AG04450 (cell line): ENCODE measurements at regions of chr6 and their contacts with region 1.

Region 1: DNA sequence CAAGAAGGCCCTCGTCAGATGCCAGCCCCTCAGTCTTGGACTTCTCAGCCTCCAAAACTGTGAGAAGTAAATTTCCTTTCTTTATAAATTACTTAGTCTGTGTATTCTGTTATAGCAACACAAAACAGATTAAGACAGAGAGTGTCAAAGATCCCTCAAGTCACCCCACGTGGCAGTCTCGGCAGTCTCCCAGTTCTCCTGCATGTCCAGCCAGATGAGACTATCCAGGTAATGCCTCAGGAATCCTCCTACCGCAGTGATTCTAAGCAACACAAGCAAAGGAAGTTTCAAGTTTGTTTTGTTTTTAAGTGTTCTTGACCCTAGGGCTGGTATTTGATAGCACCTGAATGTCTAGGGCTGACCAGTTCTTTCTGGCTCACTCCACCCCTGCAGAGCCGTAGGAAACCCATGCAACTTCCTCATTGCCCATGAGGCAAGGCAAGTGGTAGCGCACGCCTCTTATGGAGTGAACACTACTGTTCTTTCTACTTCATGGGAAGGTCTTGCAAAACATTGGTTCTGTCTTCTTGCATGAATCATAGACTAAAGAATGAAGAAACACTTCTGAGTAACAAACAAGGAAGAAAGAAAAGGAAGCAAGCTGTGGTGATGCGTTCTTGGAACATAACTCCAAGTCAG is 24.8 kb upstream of the FOXQ1 start:
- DNase-seq: peak; percentile 63
- H3K4me3 ChIP-seq: no peak overlapping the region
- H3K27ac ChIP-seq: peak overlapping the region; percentile 49
- H3K27me3 ChIP-seq: no peaks in the 10 kb centered on the region
- CTCF ChIP-seq: no peak

Region 2: DNA sequence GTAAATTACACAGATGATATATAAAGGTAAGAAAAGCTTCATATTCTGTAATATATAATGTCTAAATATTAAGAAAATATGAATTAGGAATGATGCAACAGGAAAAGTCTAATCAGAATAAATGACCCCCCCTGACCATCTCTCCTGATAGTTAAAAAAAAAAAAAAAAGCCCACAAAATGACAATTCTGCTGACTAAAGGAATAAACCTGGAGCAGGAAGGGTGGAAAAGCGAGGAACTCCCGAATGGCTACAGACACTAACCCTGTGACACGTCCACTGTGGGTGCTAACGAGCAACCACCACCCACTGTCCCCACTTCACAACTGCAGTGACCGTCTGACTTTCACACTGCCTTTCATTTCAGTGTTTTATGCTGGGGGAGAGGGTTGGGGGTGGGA is 42.8 kb before region 1 on chr6:
- CTCF ChIA-PET with region 1: no interaction called
- POLR2A ChIA-PET with region 1: interaction called, 10 read pairs
- DNase-seq: no peak
- H3K4me3 ChIP-seq: no peak overlapping the region
- H3K27ac ChIP-seq: no peak overlapping the region
- H3K27me3 ChIP-seq: peaks cover 4% of the 10 kb centered on the region
- CTCF ChIP-seq: no peak

Region 3: GRCh38 chr6:1297746-1298145 is 10.7 kb after region 1 on chr6:
- CTCF ChIA-PET with region 1: interaction called, 13 read pairs
- POLR2A ChIA-PET with region 1: no interaction called
- DNase-seq: no peak
- H3K4me3 ChIP-seq: no peak overlapping the region
- H3K27ac ChIP-seq: no peak overlapping the region
- H3K27me3 ChIP-seq: no peaks in the 10 kb centered on the region
- CTCF ChIP-seq: no peak

Region 4: DNA sequence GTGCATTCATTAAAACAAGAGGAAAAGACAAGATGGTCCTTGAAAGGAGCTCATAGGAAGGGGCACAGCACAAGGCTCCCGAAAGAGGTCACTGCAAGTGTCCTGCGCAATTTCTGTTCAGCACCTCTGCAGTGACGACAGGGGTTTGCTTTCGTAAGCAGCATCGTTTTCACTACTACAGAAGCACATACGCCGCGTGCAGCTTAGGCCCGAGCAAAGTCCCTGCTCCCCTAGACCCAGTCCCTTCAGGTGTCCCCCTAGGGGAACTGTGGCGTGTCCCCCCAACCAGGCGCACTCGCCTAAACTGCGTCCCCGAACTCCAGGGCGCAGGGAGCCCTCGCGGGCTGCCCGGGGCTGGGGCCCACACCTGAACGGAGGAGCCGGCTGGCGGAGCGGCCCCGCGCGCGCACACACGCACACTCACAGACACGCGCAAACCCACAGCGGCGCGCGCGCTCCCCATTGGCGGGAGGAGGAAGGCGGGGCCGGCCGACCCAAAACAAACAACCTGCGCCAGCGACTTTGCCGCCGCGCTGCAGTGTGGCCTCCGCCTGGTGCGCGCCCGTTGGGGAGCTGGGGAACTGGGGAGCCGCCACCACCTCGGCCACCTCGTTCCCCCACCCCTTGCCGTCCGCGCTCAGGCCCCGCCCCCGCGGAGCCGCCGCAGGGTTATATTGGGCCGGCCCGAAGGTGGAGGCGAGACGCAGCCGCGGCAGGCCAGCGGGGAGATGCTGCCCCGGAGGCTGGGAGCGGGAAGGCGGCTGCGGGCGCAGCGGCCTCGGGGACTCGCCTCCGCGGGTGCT is 24.5 kb after region 1 on chr6 and contains the start of gene FOXQ1:
- CTCF ChIA-PET with region 1: no interaction called
- POLR2A ChIA-PET with region 1: no interaction called
- DNase-seq: no peak
- H3K4me3 ChIP-seq: peak within 1 kb of the TSS; percentile 50
- H3K27ac ChIP-seq: no peak within 1 kb of the TSS
- H3K27me3 ChIP-seq: peaks cover 71% of the 10 kb centered on the region
- CTCF ChIP-seq: no peak
- polyA plus RNA-seq, gene FOXQ1: 0.07 TPM in 1 of 2 replicates, not detected in the other